Activated B cell treated with CpG ODN at 0.5 μM for 24 hours (primary cell): ENCODE measurements at regions of chr15 and their contacts with region 1.

Region 1: DNA sequence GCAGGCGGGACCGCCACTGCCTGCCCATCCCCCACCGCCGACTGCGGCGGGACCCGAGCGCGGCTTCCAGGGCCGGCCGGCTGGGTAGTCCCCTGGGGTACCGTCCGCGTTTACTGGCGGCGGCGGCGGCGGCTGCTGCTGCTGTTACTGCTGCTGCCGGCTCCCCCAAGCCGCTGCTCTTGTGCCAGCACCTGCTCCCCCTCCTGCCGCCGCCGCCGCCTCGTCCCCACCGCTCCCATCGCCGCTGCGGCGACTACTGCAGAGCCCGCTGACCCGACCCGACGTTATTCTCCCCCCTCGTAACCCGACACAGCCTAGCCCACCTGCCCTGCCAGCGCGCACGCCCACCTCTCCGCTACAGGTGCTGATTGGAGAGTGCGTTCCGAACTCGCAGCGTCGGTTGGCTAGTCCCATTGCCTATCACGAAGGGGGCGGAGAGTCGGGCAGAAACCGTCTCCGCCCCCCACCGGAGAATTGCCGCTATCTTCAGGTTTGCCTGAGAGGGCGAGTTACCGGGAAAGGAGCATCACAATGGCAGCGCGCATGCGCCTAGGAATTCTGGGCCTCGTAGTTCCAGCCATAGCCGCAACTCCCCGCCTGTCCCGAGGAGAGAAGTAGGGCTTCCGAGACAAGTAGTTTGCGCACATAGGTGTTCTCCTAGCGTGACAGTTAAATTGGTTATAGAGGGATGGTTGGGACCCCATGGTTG is at the start of gene TTBK2:
- DNase-seq: peak; percentile 88
- ATAC-seq: peak; percentile 94
- H3K4me3 Mint-ChIP-seq: peak within 1 kb of the TSS; percentile 98
- H3K27ac Mint-ChIP-seq: peak within 1 kb of the TSS; percentile 91
- H3K4me1 Mint-ChIP-seq: peaks cover 34% of the 10 kb centered on the region
- H3K27me3 Mint-ChIP-seq: no peaks in the 10 kb centered on the region
- CTCF ChIP-seq: no peak
- total RNA-seq, gene TTBK2: 16.2 and 19.8 TPM in 2 replicates

Region 2: GRCh38 chr15:42548253-42549031 is 372.2 kb before region 1 on chr15 and contains the starts of genes HAUS2 and LRRC57:
- CTCF ChIA-PET with region 1: no interaction called
- POLR2A ChIA-PET with region 1: no interaction called
- intact Hi-C with region 1: loop called (anchors 1 kb)
- DNase-seq: peak; percentile 88
- ATAC-seq: peak; percentile 86
- H3K4me3 Mint-ChIP-seq: peak within 1 kb of the TSS; percentile 96
- H3K27ac Mint-ChIP-seq: peak within 1 kb of the TSS; percentile 93
- H3K4me1 Mint-ChIP-seq: peaks cover 36% of the 10 kb centered on the region
- H3K27me3 Mint-ChIP-seq: no peaks in the 10 kb centered on the region
- CTCF ChIP-seq: no peak
- total RNA-seq, gene HAUS2: 18.2 and 20.8 TPM in 2 replicates
- total RNA-seq, gene LRRC57: 16.1 and 21.4 TPM in 2 replicates

Region 3: GRCh38 chr15:42736793-42737528 is 183.7 kb before region 1 on chr15 and contains the start of gene CDAN1:
- CTCF ChIA-PET with region 1: no interaction called
- POLR2A ChIA-PET with region 1: no interaction called
- intact Hi-C with region 1: loop called (anchors 1 kb)
- DNase-seq: peak; percentile 92
- ATAC-seq: peak; percentile 96
- H3K4me3 Mint-ChIP-seq: peak within 1 kb of the TSS; percentile 83
- H3K27ac Mint-ChIP-seq: peak within 1 kb of the TSS; percentile 61
- H3K4me1 Mint-ChIP-seq: peaks cover 13% of the 10 kb centered on the region
- H3K27me3 Mint-ChIP-seq: no peaks in the 10 kb centered on the region
- CTCF ChIP-seq: no peak
- total RNA-seq, gene CDAN1: 14.6 and 15.6 TPM in 2 replicates

Region 4: GRCh38 chr15:43118829-43119228 is 198.2 kb after region 1 on chr15:
- CTCF ChIA-PET with region 1: no interaction called
- POLR2A ChIA-PET with region 1: no interaction called
- intact Hi-C with region 1: loop called (anchors 5 kb)
- DNase-seq: no peak
- ATAC-seq: peak; percentile 42
- H3K4me3 Mint-ChIP-seq: peak overlapping the region; percentile 7
- H3K27ac Mint-ChIP-seq: peak overlapping the region; percentile 92
- H3K4me1 Mint-ChIP-seq: peaks cover 39% of the 10 kb centered on the region
- H3K27me3 Mint-ChIP-seq: no peaks in the 10 kb centered on the region
- CTCF ChIP-seq: no peak

Region 5: DNA sequence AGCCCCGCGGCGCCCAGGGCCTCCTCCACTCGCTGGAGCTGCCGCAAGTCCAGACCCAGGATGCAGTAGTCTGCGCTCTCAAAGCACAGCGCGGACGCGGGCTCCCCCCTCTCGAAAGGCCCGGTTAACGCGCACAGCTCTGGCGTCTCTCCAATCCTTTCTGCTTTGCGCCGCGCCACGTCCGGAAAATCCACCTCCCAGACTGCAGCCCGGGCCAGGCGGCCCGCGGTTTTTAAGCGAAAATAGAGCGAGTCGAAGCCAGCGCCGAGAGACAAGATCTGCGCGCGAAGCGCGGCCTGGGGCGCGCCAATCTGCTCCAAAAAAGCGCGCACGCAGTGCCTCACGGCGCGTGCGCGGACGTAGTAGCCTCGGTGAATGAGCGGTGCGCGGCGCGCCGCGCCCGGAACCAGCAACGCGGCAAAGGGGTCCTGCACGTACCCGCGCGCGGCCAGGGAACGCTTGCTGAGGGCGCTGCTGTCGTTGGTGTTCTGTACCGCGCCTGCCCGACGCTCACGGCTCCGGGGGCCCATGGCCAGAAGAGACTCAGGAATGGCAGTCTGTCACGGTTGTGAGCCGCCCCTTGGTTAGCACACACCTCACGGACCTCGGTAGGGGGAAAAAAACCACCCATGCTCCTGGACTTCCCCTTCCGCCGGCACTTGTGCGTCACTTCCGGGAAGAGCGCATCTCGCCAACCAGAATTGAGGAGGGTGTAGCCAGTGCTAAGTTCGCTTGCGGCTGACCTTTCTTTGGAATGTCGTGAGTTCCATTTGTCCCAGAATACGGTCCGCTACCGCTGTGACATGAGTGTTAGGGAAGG is 409.5 kb after region 1 on chr15 and contains the start of gene LCMT2:
- CTCF ChIA-PET with region 1: no interaction called
- POLR2A ChIA-PET with region 1: no interaction called
- intact Hi-C with region 1: loop called (anchors 1 kb)
- DNase-seq: peak; percentile 85
- ATAC-seq: peak; percentile 85
- H3K4me3 Mint-ChIP-seq: peak within 1 kb of the TSS; percentile 97
- H3K27ac Mint-ChIP-seq: peak within 1 kb of the TSS; percentile 99
- H3K4me1 Mint-ChIP-seq: peaks cover 32% of the 10 kb centered on the region
- H3K27me3 Mint-ChIP-seq: no peaks in the 10 kb centered on the region
- CTCF ChIP-seq: no peak
- total RNA-seq, gene LCMT2: 15.5 and 17.1 TPM in 2 replicates